ENCODE measurements at regions of chr6 and their contacts with region 1.

Region 1: DNA sequence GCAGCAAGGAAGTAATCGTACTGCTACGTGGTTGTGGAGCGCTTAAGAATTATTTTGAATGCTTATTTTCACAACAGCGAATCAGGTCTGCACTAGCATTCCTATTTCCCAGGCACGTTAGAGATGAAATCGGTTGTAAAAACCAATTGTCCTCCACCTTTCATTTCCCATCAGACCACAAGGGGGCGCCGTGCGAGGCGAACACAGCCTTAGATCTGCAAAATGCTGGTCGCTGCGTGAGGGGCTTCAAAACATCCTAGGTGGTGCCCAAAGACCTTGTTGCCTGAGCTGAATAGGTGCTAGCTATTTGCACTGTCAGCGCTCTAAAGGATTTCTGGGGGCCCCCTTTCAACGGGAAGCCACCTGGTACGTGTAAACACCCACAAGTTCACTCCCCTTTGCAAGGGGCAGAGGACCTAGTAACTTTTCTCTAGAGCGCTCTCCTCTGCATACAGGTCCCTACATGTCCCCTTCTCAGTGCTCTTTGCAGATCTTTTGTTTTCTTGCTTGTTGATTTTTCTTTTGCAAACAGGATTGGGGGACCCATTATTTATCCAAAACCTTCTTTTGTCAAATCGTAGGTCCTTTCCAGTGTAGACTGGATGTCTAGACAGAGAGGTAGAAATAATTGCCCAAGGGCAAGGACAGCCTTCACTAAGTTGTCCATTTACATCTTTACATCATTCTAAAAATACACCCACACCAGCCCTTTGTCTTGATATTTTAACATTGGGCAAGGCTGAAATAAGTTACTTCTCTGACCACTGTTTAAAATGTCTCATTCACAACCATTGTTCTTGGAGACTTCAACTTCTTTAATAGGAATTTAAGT is 59.8 kb downstream of the NEDD9 start:
- DNase-seq: peak in 8 of 10 donors; percentile 45 to 73 (median 62)
- H3K4me3 ChIP-seq: peak overlapping the region in 10 of 59 donors; percentile 11 to 49 (median 30)
- H3K27ac ChIP-seq: no peak overlapping the region
- H3K27me3 ChIP-seq: no peaks in the 10 kb centered on the region
- CTCF ChIP-seq: peak; percentile 64 to 92 (median 84)

Region 2: GRCh38 chr6:11241793-11242201 is 69.1 kb after region 1 on chr6:
- intact Hi-C with region 1: loop called in 1 of 2 experiments (anchors 5 kb)
- DNase-seq: peak in 8 of 10 donors; percentile 32 to 69 (median 50)
- H3K4me3 ChIP-seq: no peak overlapping the region
- H3K27ac ChIP-seq: no peak overlapping the region
- H3K27me3 ChIP-seq: no peaks in the 10 kb centered on the region
- CTCF ChIP-seq: peak in 55 of 56 donors; percentile 5 to 78 (median 58)